ENCODE measurements at regions of chr1 and their contacts with region 1.

Region 1: GRCh38 chr1:100928128-100928527 is 32.2 kb downstream of the SLC30A7 start:
- DNase-seq: peak in 1 of 35 experiments; percentile 57
- ATAC-seq: no peak
- H3K4me3 ChIP-seq: peak overlapping the region; percentile 23 to 50
- H3K4me3 Mint-ChIP-seq: no peak overlapping the region
- H3K27ac ChIP-seq: peak overlapping the region; percentile 78
- H3K27ac Mint-ChIP-seq: no peak overlapping the region
- H3K4me1 ChIP-seq: peaks cover 32 to 82% of the 10 kb centered on the region in 2 experiments
- H3K4me1 Mint-ChIP-seq: peaks cover 17 to 38% (median 37%) of the 10 kb centered on the region in 3 donors
- H3K27me3 ChIP-seq: no peaks in the 10 kb centered on the region
- H3K27me3 Mint-ChIP-seq: no peaks in the 10 kb centered on the region

Region 2: GRCh38 chr1:100834777-100835660 is 93.1 kb before region 1 on chr1:
- CTCF ChIA-PET with region 1: no interaction called
- POLR2A ChIA-PET with region 1: no interaction called
- DNase-seq: peak in 1 of 35 experiments; percentile 42
- ATAC-seq: no peak
- H3K4me3 ChIP-seq: no peak overlapping the region
- H3K4me3 Mint-ChIP-seq: no peak overlapping the region
- H3K27ac ChIP-seq: no peak overlapping the region
- H3K27ac Mint-ChIP-seq: no peak overlapping the region
- H3K4me1 ChIP-seq: no peaks in the 10 kb centered on the region
- H3K4me1 Mint-ChIP-seq: peaks cover 0 to 6% (median 0%) of the 10 kb centered on the region in 3 donors
- H3K27me3 ChIP-seq: no peaks in the 10 kb centered on the region
- H3K27me3 Mint-ChIP-seq: no peaks in the 10 kb centered on the region

Region 3: GRCh38 chr1:101233467-101233866 is 305.3 kb after region 1 on chr1:
- CTCF ChIA-PET with region 1: interaction called, 5 read pairs
- POLR2A ChIA-PET with region 1: interaction called in 1 of 2 experiments, 10 read pairs
- DNase-seq: no peak
- ATAC-seq: no peak
- H3K4me3 ChIP-seq: no peak overlapping the region
- H3K4me3 Mint-ChIP-seq: peak overlapping the region in 1 of 3 donors; percentile 3
- H3K27ac ChIP-seq: peak overlapping the region; percentile 53
- H3K27ac Mint-ChIP-seq: peak overlapping the region; percentile 90 to 93
- H3K4me1 ChIP-seq: peaks cover 8 to 22% of the 10 kb centered on the region in 2 experiments
- H3K4me1 Mint-ChIP-seq: peaks cover 30 to 64% (median 46%) of the 10 kb centered on the region in 3 donors
- H3K27me3 ChIP-seq: no peaks in the 10 kb centered on the region
- H3K27me3 Mint-ChIP-seq: no peaks in the 10 kb centered on the region

Measured in T-cell (primary cell).